ENCODE measurements at regions of chr6 and their contacts with region 1.

Region 1: DNA sequence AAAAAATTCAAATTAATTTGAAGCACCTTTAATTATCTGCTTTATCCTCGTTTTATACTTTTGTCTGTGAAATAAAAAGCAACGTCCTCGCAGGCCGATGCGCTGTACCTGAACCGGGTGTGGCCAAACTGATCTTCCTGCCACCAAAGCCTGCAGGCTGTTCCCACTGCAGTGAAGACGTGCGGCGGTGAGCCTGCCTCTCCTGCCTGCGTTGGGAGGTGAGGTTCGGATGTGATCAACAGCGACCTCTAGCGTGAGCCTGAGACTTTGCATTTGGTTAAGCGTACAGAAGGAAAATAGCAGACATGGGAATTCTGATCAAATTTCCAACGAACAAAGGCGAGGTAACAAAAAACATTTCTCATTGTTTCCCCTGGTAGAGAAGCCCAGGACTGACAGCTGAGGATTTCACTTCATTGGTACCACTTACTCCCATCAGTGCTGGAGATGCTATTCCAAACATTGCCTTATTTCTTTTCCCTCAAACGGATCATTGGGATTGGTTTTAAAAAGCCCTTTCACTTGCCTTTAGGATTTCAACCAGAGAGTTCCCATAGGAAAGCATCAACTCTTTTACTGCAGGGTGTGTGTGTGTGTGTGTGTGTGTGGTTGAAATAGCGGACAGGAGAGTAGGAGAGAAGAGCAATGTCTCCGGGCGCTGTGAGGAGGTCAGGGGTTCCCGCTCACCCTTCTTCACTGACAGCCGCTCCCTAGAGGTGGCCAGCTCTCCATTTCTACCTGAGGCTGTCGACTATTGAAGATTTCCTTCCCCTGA is 56.6 kb upstream of the CCN6 start:
- DNase-seq: peak; percentile 76
- H3K4me3 ChIP-seq: peak overlapping the region in 1 of 2 experiments; percentile 40; a peak in 1 of 4 replicates
- H3K27ac ChIP-seq: no peak overlapping the region
- H3K4me1 ChIP-seq: peaks cover 4 to 12% of the 10 kb centered on the region in 2 experiments; a peak in 1 of 4 replicates
- H3K27me3 ChIP-seq: no peaks in the 10 kb centered on the region
- CTCF ChIP-seq: peak; percentile 90
- EP300 ChIP-seq: no peak
- RAD21 ChIP-seq: peak; percentile 99

Region 2: DNA sequence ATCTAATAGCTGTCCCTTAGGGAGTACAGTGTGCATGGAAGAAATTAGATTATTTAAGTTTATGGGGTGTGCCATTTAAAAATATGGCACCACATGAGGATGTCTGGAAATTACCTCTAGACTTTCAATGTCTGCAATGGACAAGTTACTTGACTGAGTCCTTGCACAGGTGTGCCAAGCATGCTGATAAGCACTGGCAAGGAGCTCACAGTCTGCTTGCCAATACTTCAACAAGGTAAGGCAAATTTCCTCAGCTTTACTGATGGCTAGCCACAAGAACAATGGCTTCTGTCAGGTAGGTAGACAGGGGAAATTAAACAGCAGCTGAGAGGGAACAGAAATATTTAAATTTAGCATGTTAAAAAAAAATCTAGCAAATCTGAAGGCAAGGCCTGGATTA is 300.5 kb before region 1 on chr6:
- CTCF ChIA-PET with region 1: interaction called, 14 read pairs
- POLR2A ChIA-PET with region 1: no interaction called
- DNase-seq: no peak
- H3K4me3 ChIP-seq: no peak overlapping the region
- H3K27ac ChIP-seq: no peak overlapping the region; a peak in 1 of 4 replicates
- H3K4me1 ChIP-seq: peaks cover 0 to 24% of the 10 kb centered on the region in 2 experiments; a peak in 2 of 4 replicates
- H3K27me3 ChIP-seq: no peaks in the 10 kb centered on the region
- CTCF ChIP-seq: no peak
- EP300 ChIP-seq: no peak
- RAD21 ChIP-seq: no peak

Region 3: GRCh38 chr6:111944541-111944940 is 52.7 kb before region 1 on chr6:
- CTCF ChIA-PET with region 1: no interaction called
- POLR2A ChIA-PET with region 1: no interaction called
- DNase-seq: no peak
- H3K4me3 ChIP-seq: no peak overlapping the region
- H3K27ac ChIP-seq: no peak overlapping the region
- H3K4me1 ChIP-seq: no peaks in the 10 kb centered on the region; a peak in 1 of 4 replicates
- H3K27me3 ChIP-seq: no peaks in the 10 kb centered on the region
- CTCF ChIP-seq: no peak
- EP300 ChIP-seq: no peak
- RAD21 ChIP-seq: no peak

Region 4: GRCh38 chr6:112113431-112113830 is 116.2 kb after region 1 on chr6:
- CTCF ChIA-PET with region 1: no interaction called
- POLR2A ChIA-PET with region 1: no interaction called
- DNase-seq: no peak
- H3K4me3 ChIP-seq: no peak overlapping the region
- H3K27ac ChIP-seq: no peak overlapping the region
- H3K4me1 ChIP-seq: peaks cover 0 to 5% of the 10 kb centered on the region in 2 experiments; a peak in 2 of 4 replicates
- H3K27me3 ChIP-seq: no peaks in the 10 kb centered on the region
- CTCF ChIP-seq: no peak
- EP300 ChIP-seq: no peak
- RAD21 ChIP-seq: no peak